ENCODE measurements at regions of chr17 and their contacts with region 1.

Region 1: DNA sequence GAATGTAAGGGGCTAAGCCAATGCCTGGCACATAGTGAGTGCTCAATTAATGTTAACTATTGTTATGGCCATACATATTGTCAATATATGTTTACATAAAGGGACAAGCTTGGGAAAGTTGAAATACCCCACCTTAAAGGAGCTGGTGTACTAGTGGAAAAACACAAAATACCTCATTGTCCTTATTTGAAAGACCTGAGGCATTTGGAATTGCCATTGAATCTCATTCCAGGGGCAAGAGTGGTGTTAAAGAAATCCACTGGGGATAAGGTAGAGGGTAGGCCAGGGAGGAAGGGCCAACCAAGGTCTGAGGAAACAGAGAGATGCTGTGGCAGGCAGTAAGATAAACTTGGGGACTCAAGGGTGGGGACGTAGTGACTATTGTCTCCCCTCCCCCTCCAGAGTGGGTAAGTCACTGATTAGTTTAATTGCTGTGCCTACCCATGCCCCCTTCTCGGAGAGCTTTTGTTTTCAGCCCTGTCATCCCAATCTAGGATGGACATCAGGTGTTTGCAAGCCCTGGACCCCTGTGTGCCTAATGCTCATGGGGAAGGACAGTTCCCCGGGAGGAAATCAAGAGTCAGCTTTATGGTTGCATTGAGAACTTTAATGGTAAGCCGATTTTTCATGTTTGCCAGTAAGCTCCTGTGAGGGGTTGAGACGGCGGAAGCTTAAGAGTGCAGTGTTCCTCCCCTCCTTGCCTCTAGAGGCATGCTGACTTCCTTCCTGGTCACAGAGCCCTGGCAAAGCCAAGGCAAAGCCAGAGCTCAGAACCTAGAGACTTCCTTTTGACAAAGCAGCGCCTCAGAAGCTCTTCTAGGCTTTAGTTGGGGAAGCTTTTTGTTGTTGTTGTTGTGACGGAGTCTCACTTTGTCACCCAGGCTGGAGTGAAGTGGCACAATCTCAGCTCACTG is 2.5 kb upstream of the HEATR9 start:
- DNase-seq: peak; percentile 45
- ATAC-seq: peak; percentile 93
- H3K4me3 Mint-ChIP-seq: peak overlapping the region; percentile 29
- H3K27ac Mint-ChIP-seq: peak overlapping the region; percentile 32
- H3K4me1 Mint-ChIP-seq: peaks cover 38% of the 10 kb centered on the region
- H3K27me3 Mint-ChIP-seq: no peaks in the 10 kb centered on the region

Region 2: DNA sequence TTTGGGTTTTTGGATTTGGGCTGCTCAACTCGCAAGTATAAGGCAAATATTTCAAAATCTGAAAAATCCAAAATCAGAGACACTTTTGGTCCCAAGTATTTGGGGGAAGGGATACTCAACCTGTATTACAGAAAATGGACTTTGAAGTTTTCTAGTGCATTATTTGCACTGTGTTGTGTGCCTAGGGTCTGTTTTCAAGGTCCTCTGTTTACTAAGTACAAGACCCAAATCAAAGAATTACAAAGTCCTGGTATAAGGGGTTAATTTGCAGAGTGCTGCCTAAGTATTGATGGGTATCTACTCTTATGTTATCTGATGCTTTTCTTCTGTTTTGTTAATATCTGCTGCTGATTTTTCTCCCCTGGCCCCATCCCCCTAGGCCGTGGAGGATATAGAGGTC is 27.5 kb before region 1 on chr17:
- POLR2A ChIA-PET with region 1: no interaction called
- DNase-seq: no peak
- ATAC-seq: no peak
- H3K4me3 Mint-ChIP-seq: no peak overlapping the region
- H3K27ac Mint-ChIP-seq: no peak overlapping the region
- H3K4me1 Mint-ChIP-seq: peaks cover 8% of the 10 kb centered on the region
- H3K27me3 Mint-ChIP-seq: no peaks in the 10 kb centered on the region

Region 3: DNA sequence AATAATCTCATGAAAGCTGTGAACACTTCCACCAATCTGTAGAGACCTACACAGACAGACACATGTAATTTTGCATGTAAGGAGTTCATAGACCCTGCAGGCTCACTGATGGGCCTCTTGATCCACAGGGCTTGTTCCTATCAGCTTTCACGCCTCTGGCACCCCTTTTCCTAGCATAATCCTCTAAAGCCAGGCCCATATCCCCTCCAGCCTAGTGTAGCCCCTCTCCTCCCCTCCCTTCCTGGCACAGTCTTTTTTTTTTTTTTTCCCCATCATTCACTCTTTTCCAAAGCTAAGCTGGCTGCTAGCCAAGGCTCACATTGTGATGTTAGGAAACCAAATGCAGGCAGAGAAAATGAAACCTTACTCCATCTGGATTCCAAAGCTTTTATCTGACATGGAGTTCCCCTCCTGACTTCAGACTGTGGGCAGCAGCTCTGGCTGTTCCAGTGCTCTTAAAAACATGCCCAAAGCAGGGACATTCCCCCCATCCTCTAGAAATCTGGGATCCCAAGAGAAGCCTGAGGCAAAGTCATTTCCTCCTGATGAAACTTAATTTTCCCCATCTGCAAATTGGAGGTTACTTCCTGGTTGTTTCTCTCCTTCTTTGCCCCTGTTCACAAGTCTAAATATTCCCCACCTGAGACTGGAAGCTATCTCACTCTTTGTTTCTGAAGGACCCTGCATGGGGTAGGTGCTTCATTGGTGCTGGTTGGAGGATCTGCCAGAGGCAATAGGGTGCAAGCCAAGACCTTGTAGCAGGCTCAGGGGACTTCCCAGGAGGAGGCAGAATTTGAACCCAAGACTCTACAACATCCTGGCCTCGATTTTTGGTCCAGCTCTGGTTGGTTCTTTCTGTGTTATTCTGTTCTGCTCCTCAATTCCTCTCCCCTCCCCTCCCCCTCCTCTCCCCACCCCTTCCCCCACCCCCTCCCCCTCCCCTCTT is 18.9 kb after region 1 on chr17:
- POLR2A ChIA-PET with region 1: interaction called, 30 read pairs
- DNase-seq: no peak
- ATAC-seq: peak; percentile 12
- H3K4me3 Mint-ChIP-seq: peak overlapping the region; percentile 59
- H3K27ac Mint-ChIP-seq: peak overlapping the region; percentile 88
- H3K4me1 Mint-ChIP-seq: peaks cover 55% of the 10 kb centered on the region
- H3K27me3 Mint-ChIP-seq: no peaks in the 10 kb centered on the region

Region 4: GRCh38 chr17:35898283-35899070 is 27.3 kb after region 1 on chr17:
- POLR2A ChIA-PET with region 1: interaction called, 30 read pairs
- DNase-seq: no peak
- ATAC-seq: peak; percentile 48
- H3K4me3 Mint-ChIP-seq: peak overlapping the region; percentile 80
- H3K27ac Mint-ChIP-seq: peak overlapping the region; percentile 89
- H3K4me1 Mint-ChIP-seq: peaks cover 65% of the 10 kb centered on the region
- H3K27me3 Mint-ChIP-seq: no peaks in the 10 kb centered on the region

Measured in activated naive CD8-positive, alpha-beta T cell treated with anti-CD3 and anti-CD28 coated beads, Interleukin-2, amount 10 ng/mL, durations not matched to agents 7 days and 5 days (primary cell).